Activated CD4-positive, alpha-beta T cell treated with anti-CD3 and anti-CD28 coated beads, Interleukin-2, amount 10 ng/mL, durations not matched to agents 24 days and 14 days (primary cell): ENCODE measurements at regions of chr15 and their contacts with region 1.

Region 1: GRCh38 chr15:40694688-40695468 is at the start of gene RAD51:
- DNase-seq: peak; percentile 99
- H3K4me3 Mint-ChIP-seq: peak within 1 kb of the TSS; percentile 100
- H3K27ac Mint-ChIP-seq: peak within 1 kb of the TSS; percentile 100
- H3K4me1 Mint-ChIP-seq: peaks cover 30% of the 10 kb centered on the region
- H3K27me3 Mint-ChIP-seq: no peaks in the 10 kb centered on the region
- total RNA-seq, gene RAD51: 67.5 and 70.3 TPM in 2 replicates

Region 2: GRCh38 chr15:40564591-40565332 is 130.1 kb before region 1 on chr15 and contains the start of gene CCDC32:
- intact Hi-C with region 1: loop called (anchors 1 kb)
- DNase-seq: peak; percentile 99
- H3K4me3 Mint-ChIP-seq: peak within 1 kb of the TSS; percentile 91
- H3K27ac Mint-ChIP-seq: peak within 1 kb of the TSS; percentile 94
- H3K4me1 Mint-ChIP-seq: peaks cover 28% of the 10 kb centered on the region
- H3K27me3 Mint-ChIP-seq: no peaks in the 10 kb centered on the region
- total RNA-seq, gene CCDC32: 29.9 and 33.5 TPM in 2 replicates

Region 3: GRCh38 chr15:40722934-40723333 is 28.1 kb after region 1 on chr15:
- intact Hi-C with region 1: loop called (anchors 2 kb)
- DNase-seq: no peak
- H3K4me3 Mint-ChIP-seq: no peak overlapping the region
- H3K27ac Mint-ChIP-seq: no peak overlapping the region
- H3K4me1 Mint-ChIP-seq: peaks cover 22% of the 10 kb centered on the region
- H3K27me3 Mint-ChIP-seq: no peaks in the 10 kb centered on the region

Region 4: GRCh38 chr15:40754883-40755811 is 60.3 kb after region 1 on chr15 and contains the start of gene RMDN3:
- intact Hi-C with region 1: loop called (anchors 1 kb)
- DNase-seq: peak; percentile 99
- H3K4me3 Mint-ChIP-seq: peak within 1 kb of the TSS; percentile 98
- H3K27ac Mint-ChIP-seq: peak within 1 kb of the TSS; percentile 98
- H3K4me1 Mint-ChIP-seq: peaks cover 38% of the 10 kb centered on the region
- H3K27me3 Mint-ChIP-seq: no peaks in the 10 kb centered on the region
- total RNA-seq, gene RMDN3: 36.1 and 38.9 TPM in 2 replicates

Region 5: DNA sequence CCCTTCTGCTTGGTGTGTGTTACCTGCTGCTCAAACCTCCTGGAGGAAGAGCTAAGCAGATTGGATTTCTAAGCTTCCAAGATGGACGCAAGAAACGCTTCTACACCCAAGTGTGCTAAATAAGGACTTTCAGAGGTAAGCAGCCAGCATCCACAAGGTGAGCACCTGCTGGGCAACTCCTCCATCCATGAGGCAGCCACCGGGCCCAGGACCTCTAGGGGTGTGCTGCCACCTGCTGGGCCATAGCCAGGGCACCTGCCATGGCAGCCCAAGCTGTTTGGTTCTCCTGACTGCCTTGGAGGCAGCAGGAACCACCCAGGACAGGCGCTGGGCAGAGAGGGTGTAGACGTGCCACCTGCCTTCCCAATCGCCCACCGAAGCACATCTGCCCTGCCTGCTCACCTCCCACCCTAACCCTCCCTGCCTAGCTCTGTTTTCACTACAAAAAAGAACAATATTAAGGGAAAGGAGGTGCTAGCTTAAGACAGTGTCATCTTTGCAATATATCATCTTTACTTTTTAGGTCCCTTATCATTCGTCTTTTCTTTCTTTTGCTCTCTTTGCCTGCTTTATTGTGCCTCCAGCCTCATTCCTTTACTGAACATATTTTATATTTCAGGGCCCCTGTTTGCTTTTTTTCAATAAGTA is 87.8 kb after region 1 on chr15:
- intact Hi-C with region 1: loop called (anchors 5 kb)
- DNase-seq: peak; percentile 94
- H3K4me3 Mint-ChIP-seq: no peak overlapping the region
- H3K27ac Mint-ChIP-seq: no peak overlapping the region
- H3K4me1 Mint-ChIP-seq: peaks cover 19% of the 10 kb centered on the region
- H3K27me3 Mint-ChIP-seq: no peaks in the 10 kb centered on the region

Region 6: DNA sequence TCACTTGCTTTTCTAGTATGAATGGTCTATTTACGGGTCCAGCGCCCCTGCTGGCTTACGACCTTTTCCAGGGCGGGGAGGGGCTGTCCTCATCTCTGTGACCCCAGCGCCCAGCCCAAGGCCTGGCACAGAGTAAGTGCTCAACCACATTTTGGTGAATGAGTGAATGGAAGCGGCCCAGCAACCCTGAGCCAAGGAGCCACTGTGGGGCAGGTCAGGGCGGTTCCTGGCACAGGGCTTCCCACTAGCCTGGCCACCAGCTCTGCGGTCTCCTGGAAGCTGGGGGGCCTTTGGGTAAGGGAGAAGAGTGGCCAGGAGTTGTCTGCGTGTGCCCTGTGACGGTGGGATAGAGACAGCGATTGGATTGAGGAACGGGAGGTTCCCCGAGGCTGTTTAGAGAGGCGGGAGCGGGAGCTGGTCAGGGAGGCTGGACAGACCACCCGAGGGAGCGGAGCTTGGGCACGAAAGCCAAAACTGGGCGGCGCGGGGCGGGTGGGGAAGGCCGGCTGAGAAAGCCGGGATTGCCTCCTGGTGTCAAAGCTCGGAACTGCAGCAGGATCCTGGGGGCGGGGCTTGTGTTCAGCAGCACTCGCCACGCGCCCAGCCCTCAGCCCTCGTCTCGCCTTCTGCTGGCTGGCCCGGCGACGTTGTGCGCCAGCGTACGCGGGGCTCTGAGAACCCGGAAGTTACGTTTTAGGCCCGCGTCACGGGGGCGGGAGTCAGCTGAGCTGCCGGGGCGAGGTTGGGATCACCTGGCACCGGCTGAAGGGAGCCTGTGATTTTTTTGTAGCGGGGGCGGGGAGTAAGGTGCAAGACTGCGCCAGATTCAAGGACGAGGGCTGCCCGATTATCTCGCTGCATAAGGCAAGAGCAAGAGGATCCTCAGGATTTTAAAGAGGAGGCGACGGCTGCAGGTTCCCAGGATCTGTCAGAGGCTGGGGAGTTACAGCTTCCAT is 199.1 kb after region 1 on chr15 and contains the start of gene VPS18:
- intact Hi-C with region 1: loop called (anchors 5 kb)
- DNase-seq: peak; percentile 100
- H3K4me3 Mint-ChIP-seq: peak within 1 kb of the TSS; percentile 100
- H3K27ac Mint-ChIP-seq: peak within 1 kb of the TSS; percentile 95
- H3K4me1 Mint-ChIP-seq: peaks cover 32% of the 10 kb centered on the region
- H3K27me3 Mint-ChIP-seq: peaks cover 3% of the 10 kb centered on the region
- total RNA-seq, gene VPS18: 11.2 and 11.3 TPM in 2 replicates